ENCODE measurements at regions of chr11 and their contacts with region 1.

Region 1: DNA sequence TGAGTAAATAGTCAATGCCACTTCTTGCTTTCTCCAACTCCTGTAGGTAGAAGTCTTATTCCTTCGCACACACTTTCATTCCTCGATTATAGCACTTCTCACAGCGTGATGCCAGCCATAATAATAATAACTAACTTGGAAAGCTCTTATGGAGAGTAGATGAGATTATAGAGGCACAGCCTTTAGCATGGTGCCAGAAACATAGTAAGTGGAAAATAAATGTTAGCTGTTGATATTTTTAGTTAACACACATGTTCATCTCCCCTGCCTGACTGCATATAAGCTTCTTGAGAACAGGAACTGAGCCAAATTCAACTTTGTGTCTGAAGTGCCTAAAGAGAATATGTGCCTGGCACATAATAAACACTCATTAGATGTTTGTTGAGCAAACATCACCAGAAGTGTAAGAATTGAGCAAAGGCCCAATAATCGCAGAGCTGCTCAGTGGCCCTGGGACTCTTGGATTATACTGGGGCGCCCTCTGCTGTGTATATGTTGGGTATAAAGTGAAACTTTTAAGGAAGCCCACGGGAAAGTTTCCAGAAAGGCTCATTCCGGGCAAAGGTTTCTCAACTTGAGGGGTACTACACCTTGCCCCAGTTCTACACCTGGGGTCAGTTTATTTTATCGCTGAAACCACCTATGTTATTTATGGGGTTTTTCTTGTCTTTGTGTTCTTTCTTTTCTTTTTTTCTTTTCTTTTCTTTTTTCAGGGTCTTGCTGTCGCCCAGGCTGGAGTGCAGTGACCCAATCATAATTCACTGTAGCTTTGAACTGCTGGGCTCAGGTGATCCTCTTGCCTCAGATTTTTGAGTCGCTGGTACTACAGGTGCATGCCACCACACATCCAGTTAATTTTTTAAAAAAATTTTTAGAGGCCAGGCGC is 22.3 kb downstream of the SLN start:
- DNase-seq: peak; percentile 67

Region 2: GRCh38 chr11:107549253-107549953 is 140.2 kb before region 1 on chr11:
- CTCF ChIA-PET with region 1: interaction called, 11 read pairs
- POLR2A ChIA-PET with region 1: no interaction called
- DNase-seq: peak; percentile 33

Region 3: DNA sequence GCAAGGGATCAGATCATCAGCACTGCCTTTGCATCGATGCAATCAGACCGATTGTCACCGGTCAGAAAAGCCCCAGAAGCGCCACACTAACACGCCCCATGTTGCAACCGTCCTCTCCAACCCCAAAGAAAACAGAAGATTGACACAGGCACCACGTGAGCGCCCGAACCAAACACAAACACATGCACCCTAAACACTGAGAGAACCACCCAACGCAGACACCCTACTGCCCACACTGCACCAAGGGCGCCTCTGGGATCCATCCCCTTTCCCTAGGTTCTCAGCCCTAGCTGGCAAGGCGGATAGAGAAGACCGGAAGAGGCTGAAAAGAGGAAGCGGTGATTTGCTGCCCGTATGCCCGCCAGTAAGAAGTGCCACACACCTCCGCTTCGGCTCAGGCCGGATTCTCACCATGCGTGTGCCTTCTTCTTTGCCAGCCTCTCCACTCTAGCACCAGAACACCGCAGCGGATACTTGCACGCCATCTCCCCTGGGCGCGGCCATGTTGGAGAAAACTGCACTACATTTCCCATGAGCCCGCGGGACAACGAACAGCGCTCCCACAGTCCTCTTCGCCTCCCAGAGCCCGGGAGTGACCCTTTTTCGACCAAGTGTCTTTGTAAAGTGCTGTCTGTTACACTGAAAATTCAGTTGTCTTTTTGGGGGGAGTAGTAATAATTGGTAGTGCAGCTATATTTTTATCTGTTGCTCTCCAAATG is 124.2 kb before region 1 on chr11 and contains the start of gene ALKBH8:
- CTCF ChIA-PET with region 1: interaction called, 40 read pairs
- POLR2A ChIA-PET with region 1: interaction called, 4 read pairs
- DNase-seq: peak; percentile 81

Region 4: DNA sequence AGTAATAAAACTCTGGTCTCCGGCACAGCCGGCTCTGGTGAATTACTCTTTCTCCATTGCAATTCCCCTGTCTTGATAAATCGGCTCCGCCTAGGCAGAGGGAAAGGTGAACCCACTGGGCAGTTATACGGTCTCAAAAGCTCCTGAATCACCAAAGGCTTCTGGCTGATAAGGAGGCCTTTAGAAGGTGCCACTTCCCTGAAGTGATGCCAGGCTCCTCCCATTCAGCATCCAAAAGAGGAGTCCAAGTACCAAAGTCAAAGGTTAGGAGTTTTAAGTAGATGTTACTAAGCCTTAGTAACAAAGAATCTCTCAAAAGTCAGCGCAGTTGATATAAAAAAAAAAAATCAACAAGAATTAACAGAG is 112.2 kb before region 1 on chr11:
- CTCF ChIA-PET with region 1: interaction called, 13 read pairs
- POLR2A ChIA-PET with region 1: no interaction called
- DNase-seq: no peak

Region 5: GRCh38 chr11:107651672-107652071 is 37.9 kb before region 1 on chr11:
- CTCF ChIA-PET with region 1: no interaction called
- POLR2A ChIA-PET with region 1: no interaction called
- DNase-seq: peak; percentile 17